ENCODE measurements at regions of chr9 and their contacts with region 1.

Region 1: GRCh38 chr9:127943731-127944144 is 6.1 kb upstream of the DPM2 start:
- DNase-seq: peak; percentile 87
- H3K4me3 Mint-ChIP-seq: no peak overlapping the region
- H3K27ac Mint-ChIP-seq: peak overlapping the region; percentile 86
- H3K4me1 Mint-ChIP-seq: peaks cover 47% of the 10 kb centered on the region
- H3K27me3 Mint-ChIP-seq: peaks cover 3% of the 10 kb centered on the region

Region 2: GRCh38 chr9:127664667-127665507 is 278.9 kb before region 1 on chr9:
- CTCF ChIA-PET with region 1: no interaction called
- DNase-seq: no peak
- H3K4me3 Mint-ChIP-seq: no peak overlapping the region
- H3K27ac Mint-ChIP-seq: no peak overlapping the region
- H3K4me1 Mint-ChIP-seq: no peaks in the 10 kb centered on the region
- H3K27me3 Mint-ChIP-seq: peaks cover 3% of the 10 kb centered on the region

Region 3: GRCh38 chr9:127754099-127755050 is 189.4 kb before region 1 on chr9:
- CTCF ChIA-PET with region 1: no interaction called
- DNase-seq: no peak
- H3K4me3 Mint-ChIP-seq: no peak overlapping the region
- H3K27ac Mint-ChIP-seq: no peak overlapping the region
- H3K4me1 Mint-ChIP-seq: no peaks in the 10 kb centered on the region
- H3K27me3 Mint-ChIP-seq: no peaks in the 10 kb centered on the region

Region 4: DNA sequence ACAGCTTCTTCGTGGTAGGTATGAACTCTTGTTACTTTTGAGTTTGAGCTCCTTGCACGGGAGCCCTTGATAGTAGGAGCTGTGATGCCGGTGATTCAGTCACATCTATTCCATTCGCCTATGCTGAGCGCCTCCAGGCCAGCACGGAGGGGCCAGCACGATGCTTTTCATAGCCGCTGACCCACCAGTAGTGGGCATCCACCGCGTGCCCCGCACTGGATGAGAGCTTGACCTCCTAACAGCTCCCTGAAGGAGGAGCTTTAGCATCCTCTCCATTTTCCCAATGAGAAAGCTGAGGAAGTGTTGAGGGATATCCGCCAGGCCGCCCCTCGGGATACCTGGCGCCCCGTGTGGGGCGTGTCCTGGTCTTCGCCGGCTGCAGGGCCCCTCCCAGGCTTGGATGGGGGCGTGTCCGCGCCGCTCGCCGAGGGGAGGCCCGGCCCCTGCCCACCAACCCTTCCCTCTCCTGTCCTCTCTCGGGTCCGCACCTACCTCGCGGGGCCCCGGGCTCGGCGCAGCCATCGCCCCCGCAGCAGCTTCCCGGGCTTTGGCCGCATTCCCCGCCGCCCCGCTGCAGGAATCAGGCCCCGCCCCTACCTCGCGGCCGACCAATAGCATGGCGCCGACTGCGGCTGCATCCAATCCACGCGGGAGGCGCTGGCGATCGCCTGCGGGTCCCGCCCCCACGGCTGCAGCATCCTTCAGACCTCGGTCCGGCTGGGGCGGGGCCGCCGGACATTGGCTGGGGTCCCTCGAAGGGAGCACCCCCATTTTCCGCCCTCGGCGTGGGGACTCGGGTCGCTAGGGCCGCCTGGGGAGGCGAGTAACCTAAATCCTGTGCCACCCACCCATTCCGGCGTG is 13.3 kb before region 1 on chr9 and contains the start of gene PIP5KL1:
- CTCF ChIA-PET with region 1: interaction called, 11 read pairs
- DNase-seq: peak; percentile 85
- H3K4me3 Mint-ChIP-seq: peak within 1 kb of the TSS; percentile 57
- H3K27ac Mint-ChIP-seq: peak within 1 kb of the TSS; percentile 50
- H3K4me1 Mint-ChIP-seq: peaks cover 50% of the 10 kb centered on the region
- H3K27me3 Mint-ChIP-seq: peaks cover 63% of the 10 kb centered on the region

Region 5: DNA sequence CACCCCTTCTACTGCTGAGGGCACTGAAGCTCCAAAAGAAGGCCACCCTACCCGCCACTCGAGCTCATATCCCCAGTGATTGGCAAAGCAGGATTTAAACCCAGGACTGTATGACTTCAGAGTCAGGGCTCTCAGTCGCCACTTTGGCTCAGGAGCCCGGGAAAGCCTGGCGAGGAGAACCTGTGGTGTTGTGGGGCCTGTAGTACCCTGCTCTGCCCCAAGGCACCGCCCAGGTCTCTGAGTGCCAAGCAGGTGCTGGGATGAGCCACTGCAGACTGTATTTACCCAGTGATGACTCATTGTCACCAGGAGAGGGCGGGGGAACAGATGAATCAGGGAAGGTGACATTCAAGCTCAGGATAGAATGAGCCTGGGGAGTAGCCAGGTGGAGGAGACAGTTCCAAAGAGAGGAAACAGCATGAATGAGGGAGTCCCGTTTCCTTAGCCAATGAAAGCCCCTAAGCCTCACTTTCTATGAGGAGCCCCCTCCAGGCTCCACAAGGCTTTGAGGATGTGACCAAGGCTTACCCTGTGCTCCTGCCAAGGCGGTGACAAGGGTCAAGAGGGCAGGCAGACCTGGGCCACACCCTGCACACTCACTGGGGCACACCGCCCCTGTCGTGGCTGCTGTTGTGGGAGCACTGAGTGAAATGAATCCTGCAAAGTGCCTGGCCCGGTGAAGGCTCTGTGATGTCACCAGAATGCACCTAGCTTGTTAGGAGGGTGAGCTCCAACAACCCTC is 11.7 kb after region 1 on chr9:
- CTCF ChIA-PET with region 1: interaction called, 80 read pairs
- DNase-seq: peak; percentile 83
- H3K4me3 Mint-ChIP-seq: peak overlapping the region; percentile 32
- H3K27ac Mint-ChIP-seq: peak overlapping the region; percentile 69
- H3K4me1 Mint-ChIP-seq: peaks cover 94% of the 10 kb centered on the region
- H3K27me3 Mint-ChIP-seq: no peaks in the 10 kb centered on the region

Region 6: GRCh38 chr9:127980706-127981558 is 37.2 kb after region 1 on chr9 and contains the start of gene EEIG1:
- CTCF ChIA-PET with region 1: interaction called, 41 read pairs
- DNase-seq: peak; percentile 98
- H3K4me3 Mint-ChIP-seq: peak within 1 kb of the TSS; percentile 94
- H3K27ac Mint-ChIP-seq: peak within 1 kb of the TSS; percentile 97
- H3K4me1 Mint-ChIP-seq: peaks cover 46% of the 10 kb centered on the region
- H3K27me3 Mint-ChIP-seq: no peaks in the 10 kb centered on the region

Region 7: DNA sequence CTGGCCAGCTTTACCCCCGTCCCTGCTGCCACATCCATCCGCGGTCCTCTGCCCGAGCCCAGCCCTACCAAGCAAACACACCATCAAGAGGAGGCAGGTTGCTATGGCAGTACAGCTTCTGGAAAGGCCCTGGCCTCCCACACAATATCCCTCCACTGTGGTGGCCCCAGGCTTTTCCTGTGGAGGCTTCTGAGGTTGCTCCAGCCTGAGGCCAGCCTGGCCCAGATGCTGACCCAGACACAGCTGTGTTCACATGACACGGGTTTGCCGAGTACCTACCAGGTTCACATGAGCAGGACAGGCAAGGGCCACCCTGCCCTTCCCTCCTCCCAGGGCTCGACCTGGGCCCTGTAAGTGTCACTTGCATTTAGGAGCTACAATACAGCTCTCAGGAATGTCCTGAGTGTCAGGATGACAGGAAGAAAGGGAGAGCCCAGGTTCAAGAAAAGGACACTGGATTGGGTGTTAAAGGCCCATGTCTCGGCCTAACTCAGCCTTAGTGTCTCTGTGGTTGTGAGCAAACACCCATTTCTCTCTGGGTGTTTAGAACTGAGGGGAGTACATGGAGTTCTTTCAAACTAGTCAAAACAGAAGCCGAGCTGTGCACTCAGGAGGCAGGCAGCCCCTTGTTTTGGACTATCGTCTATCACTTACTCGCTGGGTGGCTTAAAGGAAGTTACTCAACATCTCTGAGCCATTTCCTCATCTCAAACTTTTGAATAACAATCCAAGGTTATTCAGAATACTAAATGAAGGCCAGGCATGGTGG is 83.2 kb after region 1 on chr9:
- CTCF ChIA-PET with region 1: interaction called, 247 read pairs
- DNase-seq: peak; percentile 61
- H3K4me3 Mint-ChIP-seq: peak overlapping the region; percentile 87
- H3K27ac Mint-ChIP-seq: peak overlapping the region; percentile 99
- H3K4me1 Mint-ChIP-seq: peaks cover 94% of the 10 kb centered on the region
- H3K27me3 Mint-ChIP-seq: peaks cover 7% of the 10 kb centered on the region

Region 8: GRCh38 chr9:128043467-128043868 is 99.7 kb after region 1 on chr9:
- CTCF ChIA-PET with region 1: interaction called, 170 read pairs
- DNase-seq: no peak
- H3K4me3 Mint-ChIP-seq: no peak overlapping the region
- H3K27ac Mint-ChIP-seq: no peak overlapping the region
- H3K4me1 Mint-ChIP-seq: no peaks in the 10 kb centered on the region
- H3K27me3 Mint-ChIP-seq: peaks cover 32% of the 10 kb centered on the region